Esophagus muscularis mucosa (tissue), 4 donors: ENCODE measurements at regions of chr5 and their contacts with region 1.

Region 1: DNA sequence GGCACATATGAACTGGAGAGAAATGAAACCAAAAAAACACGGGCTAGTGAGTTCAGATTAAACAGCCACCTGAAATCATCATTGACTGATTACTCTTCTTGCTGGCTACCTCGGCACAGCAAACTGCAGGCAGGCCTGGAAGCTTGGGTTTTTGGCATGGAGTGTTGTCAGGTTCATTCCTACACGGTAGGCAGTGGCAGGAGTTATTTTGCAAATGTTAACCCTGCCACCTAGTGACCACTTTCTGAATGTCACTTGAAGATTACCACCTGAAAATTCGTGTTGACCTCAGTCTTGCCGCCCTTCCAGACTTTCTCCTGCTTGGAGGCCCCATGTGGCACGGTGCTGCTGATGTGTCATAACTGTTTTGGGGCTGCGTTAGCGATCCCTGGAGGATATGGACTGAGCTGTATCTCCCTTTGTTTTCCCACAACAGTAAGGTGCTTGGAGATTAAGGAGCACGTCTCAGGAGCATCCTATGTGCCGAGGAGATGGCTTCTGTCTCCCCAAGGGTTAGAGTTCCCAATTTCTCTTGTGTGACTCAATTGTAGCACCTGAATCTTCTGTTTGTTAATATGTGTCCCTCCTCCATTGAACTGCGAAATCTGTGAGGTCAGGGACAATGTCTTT is 12.7 kb upstream of the CD180 start:
- DNase-seq: no peak
- H3K4me3 ChIP-seq: no peak overlapping the region
- H3K27ac ChIP-seq: no peak overlapping the region
- H3K4me1 ChIP-seq: peaks cover 0 to 7% (median 7%) of the 10 kb centered on the region in 4 donors
- H3K27me3 ChIP-seq: no peaks in the 10 kb centered on the region
- CTCF ChIP-seq: peak; percentile 81 to 84 (median 84)
- EP300 ChIP-seq: no peak
- POLR2A ChIP-seq: no peak

Region 2: GRCh38 chr5:66306105-66306843 is 903.0 kb before region 1 on chr5:
- intact Hi-C with region 1: loop called (anchors 10 kb)
- DNase-seq: no peak
- H3K4me3 ChIP-seq: no peak overlapping the region
- H3K27ac ChIP-seq: no peak overlapping the region
- H3K4me1 ChIP-seq: peaks cover 10 to 15% (median 13%) of the 10 kb centered on the region in 4 donors
- H3K27me3 ChIP-seq: peaks cover 0 to 7% (median 0%) of the 10 kb centered on the region in 4 donors
- CTCF ChIP-seq: peak; percentile 63 to 80 (median 63)
- EP300 ChIP-seq: no peak
- POLR2A ChIP-seq: no peak

Region 3: GRCh38 chr5:66814146-66814991 is 394.9 kb before region 1 on chr5:
- intact Hi-C with region 1: loop called (anchors 5 kb)
- DNase-seq: no peak
- H3K4me3 ChIP-seq: no peak overlapping the region
- H3K27ac ChIP-seq: no peak overlapping the region
- H3K4me1 ChIP-seq: peaks cover 0 to 6% (median 0%) of the 10 kb centered on the region in 4 donors
- H3K27me3 ChIP-seq: no peaks in the 10 kb centered on the region
- CTCF ChIP-seq: peak; percentile 58 to 76 (median 71)
- EP300 ChIP-seq: no peak
- POLR2A ChIP-seq: no peak

Region 4: GRCh38 chr5:66987949-66988838 is 221.1 kb before region 1 on chr5:
- intact Hi-C with region 1: loop called (anchors 5 kb)
- DNase-seq: no peak
- H3K4me3 ChIP-seq: no peak overlapping the region
- H3K27ac ChIP-seq: no peak overlapping the region
- H3K4me1 ChIP-seq: peaks cover 14 to 25% (median 23%) of the 10 kb centered on the region in 4 donors
- H3K27me3 ChIP-seq: no peaks in the 10 kb centered on the region
- CTCF ChIP-seq: peak; percentile 74 to 95 (median 77)
- EP300 ChIP-seq: no peak
- POLR2A ChIP-seq: no peak

Region 5: DNA sequence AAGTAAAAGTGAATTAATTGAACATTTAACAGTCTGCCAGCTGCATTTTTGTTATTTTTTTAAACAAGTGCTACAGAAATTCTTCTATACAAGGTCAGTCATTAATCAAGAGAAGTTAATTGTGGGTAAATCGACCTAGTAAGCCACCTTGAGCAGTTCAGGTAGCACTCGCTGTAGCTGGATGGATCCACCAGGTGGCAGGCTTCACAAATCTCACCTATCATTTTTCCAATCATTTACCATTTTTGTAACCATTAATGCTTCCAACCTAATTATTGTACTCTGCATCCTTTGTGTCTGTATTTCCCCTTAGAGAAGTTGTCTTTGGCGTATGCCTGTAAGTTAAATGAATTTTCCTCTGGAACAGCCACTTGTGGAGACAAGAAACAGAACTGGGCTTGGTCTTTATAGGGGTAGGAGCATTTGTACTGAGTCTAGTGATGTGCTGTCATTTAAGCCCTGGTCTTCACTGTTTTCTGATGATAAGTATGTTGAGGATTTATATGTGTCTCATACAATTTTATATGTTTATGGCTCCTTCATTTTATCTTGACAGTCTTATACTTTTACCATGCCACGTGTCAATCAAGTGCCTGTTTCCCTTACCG is 52.2 kb before region 1 on chr5:
- intact Hi-C with region 1: loop called (anchors 2 kb)
- DNase-seq: peak; percentile 90
- H3K4me3 ChIP-seq: no peak overlapping the region
- H3K27ac ChIP-seq: peak overlapping the region in 3 of 4 donors; percentile 4 to 26 (median 20)
- H3K4me1 ChIP-seq: peaks cover 0 to 39% (median 32%) of the 10 kb centered on the region in 4 donors
- H3K27me3 ChIP-seq: no peaks in the 10 kb centered on the region
- CTCF ChIP-seq: peak; percentile 80 to 85 (median 83)
- EP300 ChIP-seq: no peak
- POLR2A ChIP-seq: no peak